SK-N-SH (cell line): ENCODE measurements at regions of chr7 and their contacts with region 1.

Region 1: GRCh38 chr7:17769918-17770317 is 170.4 kb downstream of the SNX13 start:
- DNase-seq: peak; percentile 48
- H3K4me3 ChIP-seq: no peak overlapping the region; a peak in 1 of 4 replicates
- H3K27ac ChIP-seq: no peak overlapping the region
- H3K4me1 ChIP-seq: peaks cover 0 to 4% of the 10 kb centered on the region in 2 experiments; a peak in 2 of 4 replicates
- H3K27me3 ChIP-seq: no peaks in the 10 kb centered on the region; the same call in 1 of the 2 replicates
- CTCF ChIP-seq: peak; percentile 98
- EP300 ChIP-seq: no peak
- RAD21 ChIP-seq: peak; percentile 99

Region 2: DNA sequence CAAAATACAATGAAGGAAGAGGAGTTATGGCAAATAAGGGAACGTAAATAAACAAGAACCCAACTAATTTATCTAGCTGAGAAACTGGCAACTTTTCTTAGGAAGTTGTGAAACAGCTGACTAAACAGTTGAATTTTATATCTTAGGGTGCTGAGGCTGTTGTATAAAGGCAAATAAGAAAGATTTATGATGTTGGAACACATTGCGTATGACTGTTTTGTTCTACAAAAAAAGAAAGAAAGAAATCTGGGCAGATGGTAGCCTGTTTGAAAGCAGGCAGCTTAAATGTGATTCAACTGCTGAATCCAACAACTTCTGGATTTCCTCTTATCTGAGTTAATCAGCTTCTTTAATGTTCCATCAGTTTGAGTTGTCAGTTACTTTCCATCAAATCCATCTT is 44.1 kb before region 1 on chr7:
- CTCF ChIA-PET with region 1: interaction called, 14 read pairs
- POLR2A ChIA-PET with region 1: no interaction called
- DNase-seq: no peak
- H3K4me3 ChIP-seq: no peak overlapping the region
- H3K27ac ChIP-seq: no peak overlapping the region
- H3K4me1 ChIP-seq: no peaks in the 10 kb centered on the region
- H3K27me3 ChIP-seq: peaks cover 37% of the 10 kb centered on the region; the same call in 1 of the 2 replicates
- CTCF ChIP-seq: no peak
- EP300 ChIP-seq: no peak
- RAD21 ChIP-seq: no peak

Region 3: DNA sequence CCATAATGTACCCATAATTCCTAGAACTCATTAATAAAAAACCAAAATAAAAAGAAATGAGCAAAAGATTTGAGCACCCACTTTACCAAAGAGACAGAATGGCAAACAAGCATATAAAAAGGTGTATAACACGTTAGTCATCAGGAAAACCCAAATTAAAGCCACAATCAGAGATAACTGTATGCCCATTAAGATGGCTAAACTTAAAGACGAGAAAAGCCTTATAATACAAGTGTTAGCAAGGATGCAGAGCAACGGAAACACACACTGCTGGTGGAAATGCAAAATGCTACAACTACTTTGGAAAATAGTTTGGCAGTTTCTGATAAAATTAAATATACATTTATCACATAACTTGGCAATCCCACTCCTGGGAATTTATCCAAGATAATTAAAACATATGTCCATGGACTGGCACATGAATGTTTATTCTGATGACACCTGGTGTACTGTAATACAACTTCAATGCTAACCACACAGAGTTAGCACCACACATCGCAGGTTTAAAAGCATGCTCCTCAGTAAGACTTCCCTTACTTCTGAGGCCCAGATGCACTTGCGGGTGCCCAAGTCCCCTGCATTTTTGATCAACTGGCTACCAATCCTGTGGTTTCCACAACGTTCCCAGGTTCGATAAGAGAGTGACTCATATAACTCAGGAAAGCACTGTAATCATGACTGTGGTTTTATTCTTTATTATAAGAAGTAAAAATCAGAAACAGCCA is 11.7 kb after region 1 on chr7:
- CTCF ChIA-PET with region 1: interaction called, 27 read pairs
- POLR2A ChIA-PET with region 1: no interaction called
- DNase-seq: no peak
- H3K4me3 ChIP-seq: no peak overlapping the region
- H3K27ac ChIP-seq: no peak overlapping the region
- H3K4me1 ChIP-seq: no peaks in the 10 kb centered on the region; a peak in 1 of 4 replicates
- H3K27me3 ChIP-seq: no peaks in the 10 kb centered on the region
- CTCF ChIP-seq: no peak
- EP300 ChIP-seq: no peak
- RAD21 ChIP-seq: no peak

Region 4: GRCh38 chr7:17844514-17845196 is 74.7 kb after region 1 on chr7:
- CTCF ChIA-PET with region 1: no interaction called
- POLR2A ChIA-PET with region 1: no interaction called
- DNase-seq: no peak
- H3K4me3 ChIP-seq: no peak overlapping the region
- H3K27ac ChIP-seq: no peak overlapping the region
- H3K4me1 ChIP-seq: peaks cover 0 to 1% of the 10 kb centered on the region in 2 experiments; a peak in 1 of 4 replicates
- H3K27me3 ChIP-seq: no peaks in the 10 kb centered on the region
- CTCF ChIP-seq: no peak
- EP300 ChIP-seq: no peak
- RAD21 ChIP-seq: no peak

Region 5: DNA sequence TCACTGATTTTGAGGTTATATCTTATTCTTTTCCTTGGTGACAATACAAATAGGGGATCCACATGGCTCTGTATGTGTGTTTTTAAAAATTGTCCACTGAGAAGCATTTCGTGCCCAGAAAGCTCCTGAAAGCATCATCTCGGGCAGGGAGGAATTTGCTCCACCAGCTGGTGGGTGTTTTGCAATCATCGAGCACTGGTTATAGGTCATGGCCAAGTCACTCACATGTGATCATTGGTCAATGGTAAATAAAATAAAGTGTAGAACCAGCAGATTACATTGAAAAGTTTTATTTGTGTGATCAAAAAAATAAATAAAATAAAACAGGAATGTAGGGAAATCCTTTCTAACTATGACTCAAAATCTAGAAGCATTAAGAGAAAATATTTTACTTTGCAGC is 193.4 kb after region 1 on chr7:
- CTCF ChIA-PET with region 1: interaction called, 11 read pairs
- POLR2A ChIA-PET with region 1: no interaction called
- DNase-seq: no peak
- H3K4me3 ChIP-seq: no peak overlapping the region
- H3K27ac ChIP-seq: no peak overlapping the region
- H3K4me1 ChIP-seq: no peaks in the 10 kb centered on the region
- H3K27me3 ChIP-seq: peaks cover 25% of the 10 kb centered on the region; the same call in 1 of the 2 replicates
- CTCF ChIP-seq: no peak
- EP300 ChIP-seq: no peak
- RAD21 ChIP-seq: no peak

Region 6: GRCh38 chr7:18049262-18049661 is 279.3 kb after region 1 on chr7:
- CTCF ChIA-PET with region 1: interaction called, 10 read pairs
- POLR2A ChIA-PET with region 1: no interaction called
- DNase-seq: no peak
- H3K4me3 ChIP-seq: no peak overlapping the region
- H3K27ac ChIP-seq: no peak overlapping the region
- H3K4me1 ChIP-seq: no peaks in the 10 kb centered on the region
- H3K27me3 ChIP-seq: peaks cover 34% of the 10 kb centered on the region
- CTCF ChIP-seq: no peak
- EP300 ChIP-seq: no peak
- RAD21 ChIP-seq: no peak

Region 7: GRCh38 chr7:18225067-18225466 is 455.1 kb after region 1 on chr7:
- CTCF ChIA-PET with region 1: interaction called, 14 read pairs
- POLR2A ChIA-PET with region 1: no interaction called
- DNase-seq: no peak
- H3K4me3 ChIP-seq: no peak overlapping the region
- H3K27ac ChIP-seq: no peak overlapping the region
- H3K4me1 ChIP-seq: no peaks in the 10 kb centered on the region; a peak in 1 of 4 replicates
- H3K27me3 ChIP-seq: no peaks in the 10 kb centered on the region; the same call in 1 of the 2 replicates
- CTCF ChIP-seq: no peak
- EP300 ChIP-seq: no peak
- RAD21 ChIP-seq: no peak

Region 8: GRCh38 chr7:18352339-18353255 is 582.7 kb after region 1 on chr7:
- CTCF ChIA-PET with region 1: interaction called, 227 read pairs
- POLR2A ChIA-PET with region 1: no interaction called
- DNase-seq: peak; percentile 59
- H3K4me3 ChIP-seq: no peak overlapping the region; a peak in 1 of 4 replicates
- H3K27ac ChIP-seq: peak overlapping the region in 1 of 2 experiments; percentile 39; a peak in 2 of 4 replicates
- H3K4me1 ChIP-seq: peaks cover 8 to 36% of the 10 kb centered on the region in 2 experiments; a peak in 3 of 4 replicates
- H3K27me3 ChIP-seq: no peaks in the 10 kb centered on the region
- CTCF ChIP-seq: peak; percentile 97
- EP300 ChIP-seq: no peak
- RAD21 ChIP-seq: peak; percentile 99